ENCODE measurements at regions of chr2 and their contacts with region 1.

Region 1: DNA sequence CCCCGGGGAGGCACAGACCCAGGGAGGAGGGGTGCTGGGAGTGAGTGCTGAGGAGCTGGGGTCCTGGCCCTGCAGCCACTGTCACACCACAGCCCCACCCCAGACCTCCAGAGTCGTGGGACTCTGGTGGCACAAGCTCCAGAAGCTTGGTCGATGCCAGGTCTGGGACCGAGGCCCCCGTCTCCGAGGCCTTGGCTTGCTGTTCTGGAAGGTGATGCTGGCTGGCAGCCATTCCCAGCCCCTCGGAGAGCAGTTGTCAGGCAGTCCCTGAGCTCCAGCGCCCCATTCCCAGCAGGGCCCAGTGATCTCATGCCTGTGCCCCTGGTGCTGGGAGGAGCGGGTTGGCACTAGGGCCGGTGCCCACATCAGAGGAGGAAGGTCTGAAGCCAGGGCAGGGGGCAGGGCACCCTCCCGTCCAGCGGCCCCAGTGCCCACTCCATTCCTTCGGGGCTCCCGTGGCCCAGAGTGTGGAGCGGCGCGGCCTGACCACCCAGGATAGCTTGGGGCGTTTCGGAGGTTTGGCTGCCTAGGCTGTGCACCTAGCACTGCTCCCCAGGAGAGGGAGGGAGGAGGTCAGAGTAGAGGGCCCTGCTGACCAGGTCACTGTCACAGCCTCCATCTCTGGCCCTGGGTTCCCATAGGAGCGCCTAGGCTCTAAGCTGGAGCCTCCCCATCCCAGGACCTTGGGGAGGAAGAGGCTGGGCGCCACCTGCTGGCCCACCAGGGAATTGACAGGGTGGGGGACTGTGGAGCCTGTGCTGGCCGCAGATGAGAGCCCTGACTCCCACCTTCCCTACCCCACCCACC is 16.8 kb upstream of the ALPI start:
- DNase-seq: peak; percentile 80
- ATAC-seq: peak; percentile 71
- H3K4me3 Mint-ChIP-seq: no peak overlapping the region
- H3K27ac Mint-ChIP-seq: no peak overlapping the region
- H3K4me1 Mint-ChIP-seq: peaks cover 6% of the 10 kb centered on the region
- H3K27me3 Mint-ChIP-seq: peaks cover 3% of the 10 kb centered on the region; the same call in 1 of the 2 replicates
- CTCF ChIP-seq: peak; percentile 59; the same call in 1 of the 2 replicates

Region 2: DNA sequence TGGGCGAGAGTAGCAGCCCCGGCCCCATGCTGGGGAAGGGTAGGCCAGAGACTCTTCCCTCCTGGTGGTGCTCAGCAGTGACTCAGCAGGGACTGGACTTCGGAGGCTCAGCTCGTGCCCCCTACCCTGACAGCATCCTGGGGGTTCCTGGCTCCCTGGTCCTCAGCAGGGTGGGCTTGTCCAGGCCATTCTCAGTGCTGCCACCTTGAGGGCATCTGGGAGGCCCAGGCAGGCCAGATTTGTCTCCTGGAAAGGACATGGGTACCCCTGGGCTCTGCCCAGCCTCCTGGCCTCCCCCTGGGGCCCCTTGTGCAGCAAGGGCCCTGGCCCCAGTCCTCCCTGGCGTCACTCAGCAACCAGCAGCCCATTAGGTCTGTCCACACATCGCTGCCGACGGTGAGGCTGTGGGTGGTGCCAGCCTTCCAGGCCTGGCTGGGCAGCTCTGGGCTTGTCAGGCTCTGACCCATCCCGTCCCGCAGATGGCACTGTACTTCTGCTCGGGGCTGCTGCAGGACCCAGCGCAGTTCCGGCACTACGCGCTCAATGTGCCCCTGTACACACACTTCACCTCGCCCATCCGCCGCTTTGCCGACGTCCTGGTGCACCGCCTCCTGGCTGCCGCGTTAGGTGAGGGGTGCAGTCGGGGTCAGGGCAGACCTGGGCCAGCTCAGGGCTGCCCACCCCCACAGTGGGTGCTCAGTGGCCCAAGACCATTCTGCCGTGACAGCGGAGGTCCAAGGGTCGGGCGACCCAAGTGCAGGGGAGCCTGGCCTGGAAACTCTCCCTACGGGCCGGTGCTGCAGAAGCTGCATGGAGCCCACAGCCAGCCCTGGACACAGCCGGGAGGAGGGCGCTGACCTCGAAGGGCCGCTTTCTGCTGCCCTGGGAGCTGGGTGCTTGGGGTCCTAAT is 105.5 kb before region 1 on chr2:
- CTCF ChIA-PET with region 1: interaction called, 16 read pairs
- POLR2A ChIA-PET with region 1: no interaction called
- DNase-seq: peak; percentile 67
- ATAC-seq: peak; percentile 10
- H3K4me3 Mint-ChIP-seq: no peak overlapping the region
- H3K27ac Mint-ChIP-seq: no peak overlapping the region
- H3K4me1 Mint-ChIP-seq: no peaks in the 10 kb centered on the region; the same call in 1 of the 2 replicates
- H3K27me3 Mint-ChIP-seq: no peaks in the 10 kb centered on the region
- CTCF ChIP-seq: peak; percentile 34

Region 3: GRCh38 chr2:232339121-232340081 is 99.8 kb before region 1 on chr2:
- CTCF ChIA-PET with region 1: interaction called, 16 read pairs
- POLR2A ChIA-PET with region 1: no interaction called
- DNase-seq: peak; percentile 76
- ATAC-seq: peak; percentile 68
- H3K4me3 Mint-ChIP-seq: no peak overlapping the region
- H3K27ac Mint-ChIP-seq: peak overlapping the region; percentile 80
- H3K4me1 Mint-ChIP-seq: peaks cover 3% of the 10 kb centered on the region
- H3K27me3 Mint-ChIP-seq: no peaks in the 10 kb centered on the region; the same call in 1 of the 2 replicates
- CTCF ChIP-seq: peak; percentile 51; the same call in 1 of the 2 replicates

Region 4: GRCh38 chr2:232418466-232419244 is 20.5 kb before region 1 on chr2:
- CTCF ChIA-PET with region 1: interaction called, 11 read pairs
- POLR2A ChIA-PET with region 1: interaction called, 4 read pairs
- DNase-seq: peak; percentile 57
- ATAC-seq: peak; percentile 6
- H3K4me3 Mint-ChIP-seq: peak overlapping the region; percentile 77
- H3K27ac Mint-ChIP-seq: no peak overlapping the region
- H3K4me1 Mint-ChIP-seq: peaks cover 26% of the 10 kb centered on the region
- H3K27me3 Mint-ChIP-seq: peaks cover 68% of the 10 kb centered on the region
- CTCF ChIP-seq: no peak

Region 5: DNA sequence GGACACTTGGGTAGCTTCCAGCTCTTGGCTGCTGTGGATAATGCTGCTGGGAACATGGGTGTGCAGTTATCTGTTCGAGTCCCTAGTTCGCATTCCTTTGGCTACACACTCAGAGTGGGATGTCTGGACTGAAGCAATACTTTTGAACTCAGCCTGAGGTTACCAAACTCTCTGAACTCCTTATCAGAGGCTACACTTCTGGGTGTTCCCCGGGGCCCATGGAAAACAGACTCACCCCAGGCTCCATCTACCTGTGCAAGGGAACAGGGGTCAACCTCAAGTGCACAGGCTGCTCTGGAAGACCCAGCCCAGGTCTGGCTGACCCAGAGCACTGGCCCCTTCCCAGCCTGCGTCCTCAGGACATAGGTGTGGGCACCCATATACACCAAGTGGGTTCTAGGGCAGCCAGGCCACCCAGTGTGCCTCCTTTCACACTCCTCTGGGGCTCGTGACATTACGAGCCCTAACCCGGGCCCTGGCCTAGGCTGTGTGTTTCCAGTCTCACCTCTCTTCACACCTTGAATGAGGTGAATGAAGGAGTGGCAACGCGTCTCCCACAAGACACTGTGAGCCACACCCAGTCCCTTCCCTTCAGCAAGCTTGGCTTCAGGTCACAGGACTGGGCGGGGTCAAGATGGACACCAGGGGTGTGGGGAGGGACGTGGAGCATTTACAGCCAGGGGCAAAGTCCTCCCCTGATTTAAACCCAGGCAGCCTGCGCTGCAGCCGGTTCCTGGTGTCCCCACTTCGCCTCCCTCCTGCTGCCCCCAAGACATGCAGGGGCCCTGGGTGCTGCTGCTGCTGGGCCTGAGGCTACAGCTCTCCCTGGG is 16.5 kb after region 1 on chr2 and contains the start of gene ALPI:
- CTCF ChIA-PET with region 1: no interaction called
- POLR2A ChIA-PET with region 1: no interaction called
- DNase-seq: no peak
- ATAC-seq: no peak
- H3K4me3 Mint-ChIP-seq: no peak within 1 kb of the TSS
- H3K27ac Mint-ChIP-seq: no peak within 1 kb of the TSS
- H3K4me1 Mint-ChIP-seq: no peaks in the 10 kb centered on the region
- H3K27me3 Mint-ChIP-seq: no peaks in the 10 kb centered on the region; the same call in 1 of the 2 replicates
- CTCF ChIP-seq: no peak
- total RNA-seq, gene ALPI: not detected in 3 replicates

Region 6: DNA sequence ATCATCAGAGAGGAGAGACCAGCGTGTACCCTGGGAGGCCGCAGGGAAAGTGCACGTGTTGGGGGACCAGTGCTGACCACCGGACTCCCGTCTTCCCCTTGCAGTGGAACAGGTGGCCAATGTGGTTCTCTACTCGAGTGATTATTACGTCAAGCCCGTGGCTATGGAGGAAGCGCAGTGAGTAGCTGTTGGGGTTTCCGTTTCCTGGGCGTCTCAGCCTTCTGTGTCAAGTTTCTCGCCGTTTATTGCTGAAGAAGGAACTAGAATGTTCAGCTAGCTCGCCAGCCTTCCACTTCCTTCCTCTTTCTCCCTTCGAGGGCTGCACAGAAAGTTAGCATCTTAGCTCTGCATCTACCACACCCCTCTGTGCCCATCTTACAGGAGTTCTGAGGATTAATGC is 892.4 kb after region 1 on chr2:
- CTCF ChIA-PET with region 1: no interaction called
- POLR2A ChIA-PET with region 1: no interaction called
- DNase-seq: no peak
- ATAC-seq: no peak
- H3K4me3 Mint-ChIP-seq: no peak overlapping the region
- H3K27ac Mint-ChIP-seq: no peak overlapping the region
- H3K4me1 Mint-ChIP-seq: peaks cover 13% of the 10 kb centered on the region
- H3K27me3 Mint-ChIP-seq: peaks cover 64% of the 10 kb centered on the region
- CTCF ChIP-seq: no peak